Naive thymus-derived CD4-positive, alpha-beta T cell (primary cell): ENCODE measurements at regions of chrX and their contacts with region 1.

Region 1: DNA sequence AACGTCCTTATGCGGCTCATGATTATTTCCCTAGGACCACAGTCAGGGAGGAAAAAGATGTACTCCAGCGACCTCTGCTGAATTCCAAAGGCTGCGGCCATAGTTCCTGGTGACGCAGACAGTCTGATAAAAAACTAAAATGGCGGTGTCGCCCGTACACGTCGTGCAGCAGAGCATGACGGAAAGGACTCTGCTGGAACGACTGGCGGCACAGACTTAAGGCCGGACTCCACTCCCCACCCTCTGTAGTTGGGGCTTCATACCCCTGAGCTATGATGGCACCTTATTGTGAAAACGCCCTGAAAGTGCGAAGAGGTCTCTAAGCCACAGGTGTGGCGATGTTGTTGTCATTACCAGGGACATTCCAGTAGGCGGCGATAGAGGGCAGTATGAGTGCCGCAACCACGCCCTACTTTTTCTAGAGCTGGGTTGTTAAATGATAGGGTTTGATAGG is 90.0 kb upstream of the EDA2R start:
- DNase-seq: peak; percentile 25 to 75 (median 68)
- ATAC-seq: peak; percentile 91
- H3K4me3 ChIP-seq: peak overlapping the region; percentile 82
- H3K4me3 Mint-ChIP-seq: peak overlapping the region; percentile 70 to 96 (median 92)
- H3K27ac ChIP-seq: peak overlapping the region; percentile 67
- H3K27ac Mint-ChIP-seq: peak overlapping the region; percentile 85 to 100 (median 97)
- H3K4me1 ChIP-seq: no peaks in the 10 kb centered on the region
- H3K4me1 Mint-ChIP-seq: peaks cover 0 to 8% (median 0%) of the 10 kb centered on the region in 7 donors
- H3K27me3 ChIP-seq: no peaks in the 10 kb centered on the region
- H3K27me3 Mint-ChIP-seq: no peaks in the 10 kb centered on the region

Region 2: GRCh38 chrX:65534450-65535292 is 1194.2 kb before region 1 on chrX and contains the start of gene LAS1L:
- CTCF ChIA-PET with region 1: no interaction called
- POLR2A ChIA-PET with region 1: no interaction called
- intact Hi-C with region 1: loop called in 1 of 2 experiments (anchors 2 kb)
- DNase-seq: peak; percentile 71 to 94 (median 90)
- ATAC-seq: peak; percentile 99
- H3K4me3 ChIP-seq: peak within 1 kb of the TSS; percentile 96
- H3K4me3 Mint-ChIP-seq: peak within 1 kb of the TSS; percentile 97 to 100 (median 100)
- H3K27ac ChIP-seq: peak within 1 kb of the TSS; percentile 75
- H3K27ac Mint-ChIP-seq: peak within 1 kb of the TSS; percentile 94 to 100 (median 98)
- H3K4me1 ChIP-seq: peaks cover 10 to 13% of the 10 kb centered on the region in 2 donors
- H3K4me1 Mint-ChIP-seq: peaks cover 5 to 28% (median 16%) of the 10 kb centered on the region in 7 donors
- H3K27me3 ChIP-seq: no peaks in the 10 kb centered on the region
- H3K27me3 Mint-ChIP-seq: no peaks in the 10 kb centered on the region
- total RNA-seq, gene LAS1L: 37.2 to 48.9 (median 44.9) TPM

Region 3: DNA sequence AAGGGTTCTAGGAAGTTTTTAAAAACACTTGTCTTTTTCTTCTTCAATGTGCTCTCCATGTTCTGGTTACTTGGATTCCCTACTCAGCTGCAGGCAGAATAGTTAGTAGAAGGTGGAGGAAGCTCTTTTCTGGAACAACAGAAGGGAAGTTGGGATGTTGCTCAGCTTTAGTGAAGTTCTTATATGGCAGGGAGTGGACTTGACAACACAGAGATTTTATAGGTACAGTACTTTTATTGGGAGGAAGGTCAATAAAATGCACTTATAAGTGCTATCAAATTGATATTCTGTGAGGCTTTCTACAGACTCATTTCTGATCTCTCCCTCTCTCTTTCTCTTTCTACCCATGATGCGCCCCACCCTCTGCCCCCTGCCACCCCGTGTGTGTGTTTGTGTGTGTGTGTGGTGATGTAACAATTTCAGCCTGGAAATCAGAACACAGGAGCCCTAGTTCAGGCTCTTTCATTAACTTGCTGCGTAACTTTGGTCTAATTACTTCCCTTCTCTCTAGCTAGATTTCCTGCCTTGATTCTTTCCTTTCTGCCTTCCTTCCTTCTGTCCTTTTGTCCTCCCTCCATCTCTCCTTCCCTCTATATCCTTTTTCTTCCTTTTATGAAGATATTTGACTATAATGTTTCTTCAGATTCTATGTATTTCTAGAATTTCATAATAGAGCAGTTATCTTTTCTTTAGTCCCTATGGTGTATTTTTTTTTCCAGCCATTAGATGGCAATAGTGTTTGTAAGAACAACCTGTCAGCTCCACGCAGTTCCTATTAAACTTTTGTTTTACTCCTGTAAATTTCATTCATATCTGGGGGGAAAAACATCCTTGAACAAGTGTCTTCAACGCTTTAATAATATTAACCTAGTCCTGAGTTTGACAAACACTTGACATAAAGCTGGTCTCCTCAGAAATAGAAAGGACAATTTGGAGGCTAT is 527.7 kb before region 1 on chrX:
- CTCF ChIA-PET with region 1: no interaction called
- POLR2A ChIA-PET with region 1: no interaction called
- intact Hi-C with region 1: loop called (anchors 1 to 2 kb)
- DNase-seq: peak in 2 of 9 donors; percentile 5 to 12
- ATAC-seq: no peak
- H3K4me3 ChIP-seq: no peak overlapping the region
- H3K4me3 Mint-ChIP-seq: peak overlapping the region in 8 of 10 donors; percentile 0 to 63 (median 21)
- H3K27ac ChIP-seq: no peak overlapping the region
- H3K27ac Mint-ChIP-seq: peak overlapping the region in 2 of 9 donors; percentile 13 to 25
- H3K4me1 ChIP-seq: no peaks in the 10 kb centered on the region
- H3K4me1 Mint-ChIP-seq: peaks cover 16 to 31% (median 22%) of the 10 kb centered on the region in 7 donors
- H3K27me3 ChIP-seq: no peaks in the 10 kb centered on the region
- H3K27me3 Mint-ChIP-seq: no peaks in the 10 kb centered on the region

Region 4: DNA sequence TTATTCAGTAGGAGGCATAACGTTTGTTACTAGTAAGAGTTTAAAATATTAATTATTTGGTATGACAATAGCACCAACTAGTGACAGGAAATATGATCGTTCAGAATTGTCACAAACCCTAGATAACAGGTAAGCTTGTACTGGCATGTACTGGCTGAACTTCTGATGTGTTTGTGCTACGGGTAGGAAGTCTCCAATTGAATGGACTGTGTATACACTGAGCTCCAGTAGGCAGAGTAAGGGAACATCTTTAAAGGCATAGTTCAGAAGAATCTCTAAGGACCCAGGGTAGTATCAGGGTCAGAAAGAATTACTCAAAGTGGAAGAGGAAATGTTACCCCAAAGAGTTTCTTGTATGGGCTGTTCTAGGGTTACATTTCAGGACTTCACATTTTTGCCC is 320.3 kb before region 1 on chrX:
- CTCF ChIA-PET with region 1: no interaction called
- POLR2A ChIA-PET with region 1: no interaction called
- intact Hi-C with region 1: loop called in 1 of 2 experiments (anchors 2 kb)
- DNase-seq: peak in 4 of 9 donors; percentile 1 to 37 (median 6)
- ATAC-seq: no peak
- H3K4me3 ChIP-seq: no peak overlapping the region
- H3K4me3 Mint-ChIP-seq: no peak overlapping the region
- H3K27ac ChIP-seq: no peak overlapping the region
- H3K27ac Mint-ChIP-seq: no peak overlapping the region
- H3K4me1 ChIP-seq: no peaks in the 10 kb centered on the region
- H3K4me1 Mint-ChIP-seq: peaks cover 0 to 4% (median 0%) of the 10 kb centered on the region in 7 donors
- H3K27me3 ChIP-seq: no peaks in the 10 kb centered on the region
- H3K27me3 Mint-ChIP-seq: peaks cover 0 to 5% (median 3%) of the 10 kb centered on the region in 5 donors